ENCODE measurements at regions of chr19 and their contacts with region 1.

Region 1: DNA sequence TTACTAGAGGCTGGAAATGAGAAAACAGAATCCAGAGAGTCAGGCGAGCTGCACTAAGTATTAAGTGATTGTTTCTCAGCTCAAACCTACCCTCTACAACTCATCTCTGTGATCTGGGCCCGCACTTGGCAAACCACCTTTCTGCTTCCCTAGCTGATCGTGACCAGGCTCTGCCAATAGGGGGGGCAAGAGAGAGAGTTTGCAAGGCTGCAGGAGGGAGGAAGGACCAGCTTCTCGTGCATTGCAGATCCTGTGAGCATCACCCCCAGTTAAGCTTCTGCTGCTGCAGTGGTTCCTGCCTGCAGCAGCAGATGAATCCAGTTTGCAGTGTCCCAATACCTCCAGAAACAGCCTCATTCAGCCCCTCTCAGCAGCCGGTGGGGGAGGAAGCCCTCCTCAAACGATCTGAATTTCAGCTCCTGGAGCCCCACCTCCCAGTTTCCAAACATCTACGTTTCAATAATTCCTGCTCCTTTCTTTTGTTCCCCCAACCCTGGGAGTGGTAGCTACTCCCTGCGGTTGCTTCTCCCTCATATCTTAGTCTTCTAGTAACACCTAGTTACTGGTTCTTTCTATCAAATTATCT is 20.0 kb downstream of the XRCC1 start:
- DNase-seq: peak; percentile 63
- H3K4me3 ChIP-seq: no peak overlapping the region
- CTCF ChIP-seq: peak; percentile 95

Region 2: GRCh38 chr19:43519436-43520088 is 35.7 kb before region 1 on chr19:
- in situ Hi-C with region 1: no loop called
- DNase-seq: peak; percentile 90
- H3K4me3 ChIP-seq: no peak overlapping the region
- CTCF ChIP-seq: peak; percentile 85

Region 3: GRCh38 chr19:43595999-43596841 is 40.9 kb after region 1 on chr19 and contains the starts of genes IRGQ and ZNF576:
- in situ Hi-C with region 1: loop called (anchors 5 kb)
- DNase-seq: peak; percentile 98
- H3K4me3 ChIP-seq: peak within 1 kb of the TSS; percentile 63
- CTCF ChIP-seq: no peak

Region 4: GRCh38 chr19:43651758-43652545 is 96.7 kb after region 1 on chr19:
- in situ Hi-C with region 1: no loop called
- DNase-seq: peak; percentile 47
- H3K4me3 ChIP-seq: no peak overlapping the region
- CTCF ChIP-seq: peak; percentile 86